Dendritic cell treated with granulocyte-macrophage colony-stimulating factor and Interleukin-4, amounts not matched to agents 40 ng/mL and 50 ng/mL, for 4 days (primary cell): ENCODE measurements at regions of chr19 and their contacts with region 1.

Region 1: DNA sequence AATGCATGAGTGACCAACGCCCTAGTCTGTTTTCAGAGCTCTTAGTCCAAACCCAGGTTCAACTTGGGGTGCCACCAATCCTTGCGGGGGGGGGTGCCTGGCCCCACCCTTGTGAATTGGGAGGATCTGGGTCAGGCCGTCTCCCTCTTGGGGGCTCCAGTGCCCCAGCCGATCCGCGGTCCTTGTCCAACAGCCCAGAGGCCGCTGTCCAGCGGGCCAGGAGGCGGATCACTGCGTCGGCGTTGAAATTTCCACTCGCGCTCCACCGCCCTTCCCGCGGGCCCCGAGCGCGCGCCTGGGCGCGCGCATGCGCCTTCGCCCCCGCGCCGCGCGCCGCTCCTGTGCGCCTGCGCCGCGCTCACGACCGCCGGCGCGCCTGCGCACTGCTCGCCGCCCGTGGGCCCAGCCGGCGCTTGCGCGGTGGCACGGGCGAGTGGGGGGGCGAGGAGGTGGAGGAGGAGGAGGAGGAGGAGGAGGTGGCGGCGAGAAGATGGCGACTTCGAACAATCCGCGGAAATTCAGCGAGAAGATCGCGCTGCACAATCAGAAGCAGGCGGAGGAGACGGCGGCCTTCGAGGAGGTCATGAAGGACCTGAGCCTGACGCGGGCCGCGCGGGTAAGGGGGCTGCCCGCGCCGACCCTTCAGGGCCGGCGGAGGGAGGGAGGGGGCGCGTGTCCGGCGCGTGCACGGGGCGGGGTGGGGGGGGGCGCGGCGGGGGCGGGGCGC is at the start of gene CRTC1:
- H3K4me3 Mint-ChIP-seq: peak within 1 kb of the TSS; percentile 89
- H3K27ac Mint-ChIP-seq: peak within 1 kb of the TSS; percentile 90
- H3K4me1 Mint-ChIP-seq: peaks cover 67% of the 10 kb centered on the region
- H3K27me3 Mint-ChIP-seq: no peaks in the 10 kb centered on the region

Region 2: DNA sequence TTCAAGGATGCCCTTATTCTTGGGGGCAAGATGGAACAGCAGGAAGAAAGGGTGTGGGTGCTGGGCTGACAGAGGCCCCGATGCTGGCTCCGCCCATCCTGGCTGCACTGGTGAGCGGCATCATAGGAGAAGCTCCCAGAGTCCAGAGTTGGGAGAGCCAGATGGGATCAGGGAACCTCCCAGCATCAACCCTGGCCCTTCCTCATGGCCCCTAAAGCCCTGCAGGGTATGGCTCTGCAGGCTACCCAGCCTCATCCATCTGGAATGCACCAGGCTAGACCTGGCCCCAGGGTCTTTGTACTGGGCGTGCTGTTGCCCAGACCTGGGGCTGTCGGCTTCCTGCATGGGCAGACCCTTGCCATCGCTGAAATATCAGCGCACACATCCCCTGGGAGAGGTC is 153.6 kb before region 1 on chr19:
- intact Hi-C with region 1: no loop called
- H3K4me3 Mint-ChIP-seq: no peak overlapping the region
- H3K27ac Mint-ChIP-seq: peak overlapping the region; percentile 28
- H3K4me1 Mint-ChIP-seq: no peaks in the 10 kb centered on the region
- H3K27me3 Mint-ChIP-seq: no peaks in the 10 kb centered on the region

Region 3: GRCh38 chr19:18636183-18636968 is 47.0 kb before region 1 on chr19:
- intact Hi-C with region 1: loop called (anchors 2 kb)
- H3K4me3 Mint-ChIP-seq: peak overlapping the region; percentile 87
- H3K27ac Mint-ChIP-seq: peak overlapping the region; percentile 88
- H3K4me1 Mint-ChIP-seq: peaks cover 40% of the 10 kb centered on the region
- H3K27me3 Mint-ChIP-seq: peaks cover 24% of the 10 kb centered on the region

Region 4: DNA sequence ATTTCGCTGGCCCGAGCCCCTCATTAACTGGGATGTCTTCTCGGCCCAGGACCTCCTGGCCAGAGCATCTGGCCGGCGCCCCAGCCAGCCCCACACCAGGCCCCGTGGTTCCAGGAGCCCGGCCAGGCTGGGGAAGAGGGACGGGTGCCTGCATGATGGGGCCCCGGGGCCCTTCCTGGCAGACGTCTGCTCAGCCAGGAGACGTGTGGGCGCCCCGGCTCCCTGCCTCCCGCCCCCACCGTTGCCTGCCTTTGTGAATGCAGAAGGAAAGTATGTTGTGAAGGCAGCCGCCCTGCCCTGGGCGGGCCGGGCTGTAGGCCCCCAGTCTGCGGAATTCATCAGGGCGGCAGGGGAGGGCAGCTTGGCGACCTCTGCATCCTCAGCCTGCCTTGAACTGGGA is 112.2 kb after region 1 on chr19:
- intact Hi-C with region 1: no loop called
- H3K4me3 Mint-ChIP-seq: no peak overlapping the region
- H3K27ac Mint-ChIP-seq: no peak overlapping the region
- H3K4me1 Mint-ChIP-seq: peaks cover 8% of the 10 kb centered on the region
- H3K27me3 Mint-ChIP-seq: peaks cover 57% of the 10 kb centered on the region